ENCODE measurements at regions of chr19 and their contacts with region 1.

Region 1: DNA sequence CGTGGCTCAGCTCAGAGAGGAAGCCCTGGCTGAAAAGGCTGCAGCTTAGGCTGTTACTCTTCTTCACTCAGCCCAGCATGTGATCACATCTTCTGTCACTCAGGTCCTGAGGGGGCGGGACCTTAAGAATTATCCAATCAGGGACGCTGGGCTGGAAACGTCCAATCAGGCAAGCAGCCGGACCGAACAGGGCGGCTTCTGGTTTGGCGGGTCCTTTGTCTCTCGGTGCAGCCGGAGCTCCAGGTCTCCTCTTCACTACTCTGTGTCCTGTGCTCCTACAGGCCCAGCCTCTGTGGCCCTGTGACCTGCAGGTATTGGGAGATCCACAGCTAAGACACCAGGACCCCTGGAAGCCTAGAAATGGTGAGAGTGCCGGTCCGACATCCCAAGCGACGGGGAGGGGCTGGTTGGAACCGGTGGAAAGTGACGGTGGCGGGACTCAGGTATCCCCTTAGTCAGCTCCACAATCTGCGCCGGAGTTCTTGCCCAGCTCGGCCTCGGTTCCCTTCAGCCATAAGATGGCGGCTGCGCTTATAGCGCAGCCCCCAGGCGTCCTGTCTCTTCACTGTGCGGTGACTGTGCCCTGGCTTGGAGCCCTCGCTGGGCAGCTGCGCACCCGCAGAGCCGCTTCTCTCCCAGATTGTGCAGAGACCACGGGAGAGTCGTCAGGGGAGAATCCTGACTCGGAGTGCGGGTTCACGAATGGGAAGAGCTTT is at the start of gene ZNF93:
- DNase-seq: peak; percentile 92 to 95
- H3K4me3 ChIP-seq: peak within 1 kb of the TSS; percentile 90 to 95 (median 94)
- H3K27ac ChIP-seq: peak within 1 kb of the TSS; percentile 98
- H3K4me1 ChIP-seq: peaks cover 0 to 6% (median 2%) of the 10 kb centered on the region in 4 experiments; a peak in 4 of 7 replicates
- H3K27me3 ChIP-seq: no peaks in the 10 kb centered on the region
- CTCF ChIP-seq: no peak
- EP300 ChIP-seq: no peak
- POLR2A ChIP-seq: peak; percentile 92 to 98
- RAD21 ChIP-seq: no peak
- total RNA-seq, gene ZNF93: 61.1 and 61.8 TPM in 2 replicates

Region 2: GRCh38 chr19:19776041-19777008 is 124.6 kb before region 1 on chr19:
- CTCF ChIA-PET with region 1: interaction called, 3 read pairs
- POLR2A ChIA-PET with region 1: interaction called, 18 read pairs
- DNase-seq: peak; percentile 94 to 98
- H3K4me3 ChIP-seq: peak overlapping the region; percentile 79 to 94 (median 91)
- H3K27ac ChIP-seq: peak overlapping the region; percentile 53; the same call in 1 of the 2 replicates
- H3K4me1 ChIP-seq: peaks cover 0 to 7% (median 0%) of the 10 kb centered on the region in 4 experiments; a peak in 2 of 7 replicates
- H3K27me3 ChIP-seq: no peaks in the 10 kb centered on the region
- CTCF ChIP-seq: peak in 1 of 3 experiments; percentile 2; a peak in 1 of 4 replicates
- EP300 ChIP-seq: no peak
- POLR2A ChIP-seq: peak; percentile 13 to 64
- RAD21 ChIP-seq: no peak; a peak in 1 of 4 replicates

Region 3: DNA sequence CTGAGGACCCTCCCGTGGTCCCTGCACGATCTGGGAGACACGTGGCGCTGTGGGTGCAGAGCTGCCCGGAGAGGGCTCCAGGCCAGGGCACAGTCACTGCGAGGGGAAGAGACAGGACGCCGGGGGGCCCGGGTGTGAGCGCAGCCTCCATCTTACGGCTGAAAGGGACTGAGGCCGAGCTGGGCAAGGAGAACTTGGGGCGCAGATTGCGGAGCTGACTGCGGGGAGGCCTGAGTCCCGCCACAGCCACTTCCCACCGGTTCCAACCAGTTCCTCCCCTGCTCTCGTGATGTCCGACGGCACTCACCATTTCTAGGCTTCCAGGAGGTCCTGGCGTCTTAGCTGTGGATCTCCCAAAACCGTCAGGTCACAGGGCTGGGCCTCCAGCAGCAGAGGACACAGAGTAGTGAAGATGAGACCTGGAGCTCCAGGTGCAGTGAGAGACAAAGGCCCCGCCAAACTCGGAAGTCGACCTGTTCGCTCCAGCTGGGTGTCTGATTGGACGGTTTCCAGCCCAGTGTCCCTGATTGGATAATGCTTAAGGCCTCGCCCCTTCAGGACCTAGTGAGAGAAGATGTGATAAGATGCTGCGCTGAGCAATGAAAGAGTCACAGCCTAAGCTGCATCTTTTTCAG is 40.0 kb before region 1 on chr19:
- CTCF ChIA-PET with region 1: interaction called, 3 read pairs
- POLR2A ChIA-PET with region 1: interaction called, 453 read pairs
- DNase-seq: peak; percentile 87 to 93
- H3K4me3 ChIP-seq: peak overlapping the region; percentile 82 to 98 (median 94)
- H3K27ac ChIP-seq: peak overlapping the region; percentile 95
- H3K4me1 ChIP-seq: peaks cover 0 to 5% (median 0%) of the 10 kb centered on the region in 4 experiments; a peak in 3 of 7 replicates
- H3K27me3 ChIP-seq: no peaks in the 10 kb centered on the region
- CTCF ChIP-seq: no peak
- EP300 ChIP-seq: no peak
- POLR2A ChIP-seq: peak; percentile 96 to 99
- RAD21 ChIP-seq: no peak

Region 4: GRCh38 chr19:19884583-19884982 is 16.3 kb before region 1 on chr19:
- CTCF ChIA-PET with region 1: interaction called, 3 read pairs
- POLR2A ChIA-PET with region 1: interaction called, 28 read pairs
- DNase-seq: no peak
- H3K4me3 ChIP-seq: no peak overlapping the region
- H3K27ac ChIP-seq: no peak overlapping the region
- H3K4me1 ChIP-seq: no peaks in the 10 kb centered on the region
- H3K27me3 ChIP-seq: no peaks in the 10 kb centered on the region
- CTCF ChIP-seq: no peak
- EP300 ChIP-seq: no peak
- POLR2A ChIP-seq: no peak
- RAD21 ChIP-seq: no peak

Region 5: GRCh38 chr19:20028611-20029010 is 127.7 kb after region 1 on chr19:
- CTCF ChIA-PET with region 1: no interaction called
- POLR2A ChIA-PET with region 1: no interaction called
- DNase-seq: no peak
- H3K4me3 ChIP-seq: no peak overlapping the region
- H3K27ac ChIP-seq: no peak overlapping the region
- H3K4me1 ChIP-seq: no peaks in the 10 kb centered on the region
- H3K27me3 ChIP-seq: no peaks in the 10 kb centered on the region
- CTCF ChIP-seq: no peak
- EP300 ChIP-seq: no peak
- POLR2A ChIP-seq: no peak
- RAD21 ChIP-seq: no peak

Region 6: DNA sequence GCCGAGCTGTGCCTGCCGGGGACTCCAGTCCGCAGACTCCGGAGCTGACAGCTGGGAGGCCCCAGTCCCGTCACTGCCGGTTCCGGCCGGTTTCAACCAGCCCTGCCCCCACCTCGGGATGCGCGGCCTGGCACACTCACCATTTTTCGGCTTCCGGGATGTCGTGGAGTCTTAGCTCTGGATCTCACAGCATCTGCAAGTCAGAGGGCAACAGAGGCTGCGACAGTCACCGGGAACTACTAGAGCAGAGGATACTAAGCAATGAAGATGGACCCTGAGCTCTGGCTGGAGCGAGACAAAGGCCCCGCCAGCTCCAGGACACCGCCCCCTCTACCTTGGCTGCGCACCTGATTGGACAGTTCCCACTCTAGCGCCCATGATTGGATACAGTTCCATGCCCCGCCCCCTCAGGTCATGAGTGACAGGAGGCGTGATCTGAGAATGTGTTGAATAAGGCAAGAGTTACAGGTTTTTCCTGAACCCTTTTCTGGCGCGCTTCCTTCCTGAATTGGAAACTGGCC is 138.4 kb after region 1 on chr19 and contains the start of gene ZNF682:
- CTCF ChIA-PET with region 1: no interaction called
- POLR2A ChIA-PET with region 1: interaction called, 12 read pairs
- DNase-seq: peak; percentile 93 to 98
- H3K4me3 ChIP-seq: peak within 1 kb of the TSS; percentile 76 to 95 (median 89)
- H3K27ac ChIP-seq: peak within 1 kb of the TSS; percentile 95
- H3K4me1 ChIP-seq: peaks cover 2 to 7% (median 6%) of the 10 kb centered on the region in 4 experiments; a peak in 3 of 7 replicates
- H3K27me3 ChIP-seq: no peaks in the 10 kb centered on the region
- CTCF ChIP-seq: no peak; a peak in 1 of 4 replicates
- EP300 ChIP-seq: 0 out of 3 replicates have a peak, but pooled peaks of 1 of the 2 experiments have one; percentile 54
- POLR2A ChIP-seq: peak; percentile 75 to 97
- RAD21 ChIP-seq: no peak
- total RNA-seq, gene ZNF682: 21.7 and 27.5 TPM in 2 replicates